Pancreas (tissue), 10 donors: ENCODE measurements at regions of chr5 and their contacts with region 1.

Region 1: GRCh38 chr5:683551-684481 is 9.3 kb downstream of the TPPP start:
- DNase-seq: peak in 3 of 6 donors; percentile 13 to 62 (median 21)
- ATAC-seq: no peak
- H3K4me3 ChIP-seq: no peak overlapping the region
- H3K27ac ChIP-seq: no peak overlapping the region
- H3K4me1 ChIP-seq: no peaks in the 10 kb centered on the region
- H3K27me3 ChIP-seq: no peaks in the 10 kb centered on the region
- CTCF ChIP-seq: no peak

Region 2: DNA sequence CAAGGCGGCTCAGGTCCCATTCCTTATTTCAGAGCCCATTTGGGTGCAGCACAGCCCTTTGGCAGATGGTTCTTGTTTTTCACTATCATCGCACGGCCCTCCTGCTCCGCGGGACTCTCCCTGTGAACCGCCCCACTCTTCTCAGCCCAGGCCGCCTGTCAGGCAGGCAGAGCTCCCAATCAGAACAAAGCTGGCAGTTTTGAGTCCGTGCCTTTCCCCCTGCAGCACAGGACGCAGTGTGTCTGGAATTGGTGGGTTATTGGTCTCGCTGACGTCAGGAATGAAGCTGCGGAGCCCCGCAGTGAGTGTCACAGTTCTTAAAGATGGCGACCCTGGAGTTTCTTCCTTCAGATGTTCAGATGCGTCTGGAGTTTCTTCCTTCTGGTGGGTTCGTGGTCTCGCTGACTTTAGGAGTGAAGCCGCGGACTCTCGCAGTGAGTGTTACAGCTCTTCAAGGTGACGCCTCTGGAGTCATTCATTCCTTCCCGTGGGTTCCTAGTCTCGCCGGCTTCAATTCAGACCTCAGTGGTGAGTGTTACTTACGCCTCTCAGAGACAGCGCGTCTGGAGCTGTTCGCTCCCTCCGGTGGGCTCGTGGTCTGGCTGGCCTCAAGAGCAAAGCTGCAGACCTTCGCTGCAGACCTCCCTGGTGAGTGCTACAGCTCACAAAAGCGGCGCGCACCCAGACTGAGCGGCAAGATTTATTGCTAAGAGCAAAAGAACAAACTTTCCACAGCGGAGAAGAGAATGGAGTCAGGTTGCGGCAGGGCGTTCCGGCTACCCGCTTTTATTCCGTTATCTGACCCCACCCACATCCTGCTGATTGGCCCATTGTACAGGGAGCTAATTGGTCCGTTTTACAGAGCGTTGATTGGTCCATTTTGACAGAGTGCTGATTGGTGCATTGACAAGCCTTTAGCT is 93.2 kb after region 1 on chr5:
- intact Hi-C with region 1: loop called in 1 of 3 experiments (anchors 10 kb)
- DNase-seq: peak in 4 of 6 donors; percentile 17 to 62 (median 26)
- ATAC-seq: no peak
- H3K4me3 ChIP-seq: no peak overlapping the region
- H3K27ac ChIP-seq: no peak overlapping the region
- H3K4me1 ChIP-seq: peaks cover 0 to 7% (median 5%) of the 10 kb centered on the region in 3 donors
- H3K27me3 ChIP-seq: no peaks in the 10 kb centered on the region
- CTCF ChIP-seq: no peak

Region 3: DNA sequence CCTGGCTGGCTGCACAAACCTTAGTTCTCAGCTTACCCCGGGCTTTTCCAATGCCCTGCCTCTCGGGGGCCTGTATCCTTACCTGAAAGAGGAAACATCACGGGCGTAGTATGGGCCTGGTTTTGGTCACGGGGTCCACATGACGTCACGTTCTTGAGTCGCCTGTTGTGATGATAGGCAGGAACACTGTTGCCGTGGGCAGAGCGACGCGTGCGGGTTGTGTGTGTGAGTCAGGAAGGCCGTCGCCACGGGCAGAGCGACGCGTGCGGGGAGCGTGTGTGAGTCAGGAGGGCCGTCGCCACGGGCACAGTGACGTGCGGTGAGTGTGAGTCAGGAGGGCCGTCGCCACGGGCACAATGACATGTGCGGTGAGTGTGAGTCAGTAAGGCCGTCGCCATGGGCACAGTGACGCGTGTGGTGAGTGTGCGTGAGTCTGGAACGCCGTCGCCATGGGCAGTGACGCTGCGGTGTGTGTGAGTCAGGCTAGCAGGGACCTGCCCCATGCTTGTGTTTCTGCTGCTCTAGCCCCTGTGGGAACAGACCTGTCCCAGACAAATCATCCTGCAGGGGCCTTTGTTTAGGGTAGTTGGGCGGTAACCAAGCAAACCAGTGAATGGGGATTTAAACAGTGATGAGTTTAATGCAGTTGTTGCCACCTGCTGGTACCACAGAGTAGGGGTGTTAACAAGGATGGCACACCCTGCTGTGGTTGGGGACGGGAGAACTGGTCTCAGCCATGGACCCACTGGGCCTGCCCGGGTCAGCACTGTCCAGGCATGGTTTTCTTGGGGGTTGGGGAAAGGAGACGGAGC is 228.7 kb after region 1 on chr5:
- intact Hi-C with region 1: no loop called
- DNase-seq: no peak
- ATAC-seq: peak in 1 of 4 donors; percentile 43
- H3K4me3 ChIP-seq: no peak overlapping the region
- H3K27ac ChIP-seq: no peak overlapping the region
- H3K4me1 ChIP-seq: peaks cover 11 to 15% (median 11%) of the 10 kb centered on the region in 3 donors
- H3K27me3 ChIP-seq: no peaks in the 10 kb centered on the region
- CTCF ChIP-seq: no peak